ENCODE measurements at regions of chr17 and their contacts with region 1.

Region 1: GRCh38 chr17:79741751-79742588 is 11.2 kb downstream of the ENPP7 start:
- DNase-seq: peak; percentile 84
- ATAC-seq: peak; percentile 63
- H3K4me3 Mint-ChIP-seq: no peak overlapping the region
- H3K27ac Mint-ChIP-seq: no peak overlapping the region
- H3K4me1 Mint-ChIP-seq: peaks cover 13% of the 10 kb centered on the region
- H3K27me3 Mint-ChIP-seq: peaks cover 31% of the 10 kb centered on the region

Region 2: DNA sequence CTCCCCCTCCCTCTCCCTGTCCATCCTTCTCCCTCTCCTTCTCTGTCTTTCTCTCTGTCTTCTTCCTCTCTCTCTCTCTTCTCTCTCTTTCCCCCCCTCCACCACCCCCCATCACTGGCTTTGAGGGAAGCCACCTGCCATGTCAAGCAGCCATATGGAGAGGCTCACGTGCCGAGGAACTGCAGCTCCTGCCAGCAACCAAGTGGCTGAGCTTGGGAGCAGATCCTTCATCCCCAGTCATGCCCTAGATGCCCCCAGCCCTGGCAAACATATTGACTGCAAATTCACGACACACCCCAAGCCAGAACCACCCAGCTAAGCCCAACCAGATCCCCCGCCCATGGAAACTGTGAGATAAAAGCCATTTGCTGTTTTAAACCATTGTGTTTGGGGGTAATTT is 90.2 kb before region 1 on chr17:
- CTCF ChIA-PET with region 1: no interaction called
- POLR2A ChIA-PET with region 1: no interaction called
- intact Hi-C with region 1: no loop called
- DNase-seq: no peak
- ATAC-seq: no peak
- H3K4me3 Mint-ChIP-seq: no peak overlapping the region
- H3K27ac Mint-ChIP-seq: no peak overlapping the region
- H3K4me1 Mint-ChIP-seq: no peaks in the 10 kb centered on the region
- H3K27me3 Mint-ChIP-seq: peaks cover 25% of the 10 kb centered on the region

Region 3: DNA sequence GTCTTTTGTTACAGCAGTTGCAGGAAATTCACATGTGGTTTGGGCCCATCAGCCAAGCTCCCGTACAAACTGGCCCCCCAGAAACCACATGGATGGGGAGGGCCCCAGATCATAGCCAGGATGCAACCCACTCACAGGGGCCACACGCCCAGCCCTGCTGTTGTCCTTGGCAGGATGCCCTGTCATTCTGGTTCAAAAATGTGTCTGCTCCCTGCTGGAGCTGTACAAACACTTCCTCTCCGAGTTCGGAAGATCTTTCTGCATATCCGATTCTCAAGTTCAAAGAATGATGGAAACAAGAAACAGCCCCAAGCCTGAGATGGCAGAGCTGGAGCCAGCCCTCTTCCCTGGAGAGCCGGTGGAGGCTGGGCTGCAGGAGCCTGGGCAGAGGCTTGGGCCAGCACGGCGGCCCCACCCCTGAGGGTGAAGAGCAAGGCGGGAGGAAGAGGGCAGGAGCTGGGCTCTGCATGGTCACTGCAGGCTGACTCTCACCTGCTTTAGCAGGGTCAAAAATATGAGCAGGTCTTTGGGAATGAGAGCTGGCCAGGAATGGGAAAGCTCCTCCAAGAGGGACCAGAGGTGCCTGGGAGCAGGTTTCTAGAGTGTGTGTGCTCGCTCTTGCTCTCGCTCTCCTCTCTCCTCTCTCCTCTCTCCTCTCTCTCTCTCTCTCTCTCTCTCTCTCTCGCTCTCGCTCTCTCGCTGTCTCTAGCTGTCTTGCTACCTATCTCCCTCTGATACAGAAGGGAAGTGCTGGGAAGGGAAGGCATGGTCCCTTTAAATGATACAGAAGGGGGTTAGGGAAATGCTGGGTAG is 46.0 kb before region 1 on chr17:
- CTCF ChIA-PET with region 1: no interaction called
- POLR2A ChIA-PET with region 1: no interaction called
- intact Hi-C with region 1: no loop called
- DNase-seq: no peak
- ATAC-seq: no peak
- H3K4me3 Mint-ChIP-seq: no peak overlapping the region
- H3K27ac Mint-ChIP-seq: no peak overlapping the region
- H3K4me1 Mint-ChIP-seq: no peaks in the 10 kb centered on the region
- H3K27me3 Mint-ChIP-seq: peaks cover 17% of the 10 kb centered on the region

Region 4: GRCh38 chr17:79728226-79728907 is 13.6 kb before region 1 on chr17:
- CTCF ChIA-PET with region 1: interaction called, 11 read pairs
- POLR2A ChIA-PET with region 1: no interaction called
- intact Hi-C with region 1: loop called in 1 of 2 experiments (anchors 1 kb)
- DNase-seq: peak; percentile 91
- ATAC-seq: peak; percentile 90
- H3K4me3 Mint-ChIP-seq: peak overlapping the region; percentile 63
- H3K27ac Mint-ChIP-seq: peak overlapping the region; percentile 75
- H3K4me1 Mint-ChIP-seq: peaks cover 4% of the 10 kb centered on the region
- H3K27me3 Mint-ChIP-seq: no peaks in the 10 kb centered on the region

Region 5: GRCh38 chr17:79777894-79778503 is 36.0 kb after region 1 on chr17 and contains the start of gene CBX2:
- CTCF ChIA-PET with region 1: interaction called, 10 read pairs
- POLR2A ChIA-PET with region 1: no interaction called
- intact Hi-C with region 1: loop called in 1 of 2 experiments (anchors 1 kb)
- DNase-seq: peak; percentile 90
- ATAC-seq: peak; percentile 84
- H3K4me3 Mint-ChIP-seq: peak within 1 kb of the TSS; percentile 77
- H3K27ac Mint-ChIP-seq: peak within 1 kb of the TSS; percentile 76
- H3K4me1 Mint-ChIP-seq: peaks cover 17% of the 10 kb centered on the region
- H3K27me3 Mint-ChIP-seq: peaks cover 64% of the 10 kb centered on the region
- total RNA-seq, gene CBX2: 4.2 to 4.3 TPM

Region 6: DNA sequence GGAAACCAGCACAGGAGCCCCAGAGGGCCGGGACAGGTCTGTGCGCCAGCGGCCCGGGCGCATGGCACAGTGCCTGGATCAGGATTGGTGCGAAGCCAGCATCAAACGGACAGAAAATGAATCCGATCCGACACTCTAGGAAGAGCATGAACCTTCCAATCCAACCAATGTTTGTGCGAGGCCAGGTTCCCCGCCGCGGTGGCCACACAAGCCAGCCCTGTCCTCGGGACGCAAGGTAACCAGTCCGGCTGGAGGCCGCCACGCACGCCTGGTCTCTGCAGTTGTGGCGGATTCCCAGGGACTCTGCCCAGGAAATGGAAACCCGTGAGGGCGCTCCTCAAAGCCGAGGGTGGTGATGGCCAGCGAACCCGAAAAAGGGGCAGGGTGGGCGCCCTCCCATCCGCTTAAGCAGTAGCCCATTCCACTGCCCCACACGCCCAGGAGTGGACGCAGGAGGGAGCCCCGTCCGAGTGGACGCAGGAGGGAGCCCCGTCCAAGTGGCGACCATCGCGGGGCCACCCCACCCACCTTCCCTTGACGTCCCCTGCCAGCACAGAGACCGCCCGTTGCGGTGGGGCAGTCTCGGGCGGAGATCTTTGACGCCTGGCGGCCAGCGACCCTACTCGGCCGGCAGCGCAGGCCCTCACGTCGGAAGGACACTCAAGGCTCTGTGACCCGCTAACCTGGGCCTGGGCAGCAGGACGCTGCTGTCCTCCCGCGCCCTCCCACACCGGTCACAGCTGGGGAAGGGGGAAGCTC is 48.6 kb after region 1 on chr17:
- CTCF ChIA-PET with region 1: no interaction called
- POLR2A ChIA-PET with region 1: no interaction called
- intact Hi-C with region 1: no loop called
- DNase-seq: no peak
- ATAC-seq: peak; percentile 34
- H3K4me3 Mint-ChIP-seq: no peak overlapping the region
- H3K27ac Mint-ChIP-seq: no peak overlapping the region
- H3K4me1 Mint-ChIP-seq: peaks cover 4% of the 10 kb centered on the region
- H3K27me3 Mint-ChIP-seq: peaks cover 46% of the 10 kb centered on the region

Region 7: DNA sequence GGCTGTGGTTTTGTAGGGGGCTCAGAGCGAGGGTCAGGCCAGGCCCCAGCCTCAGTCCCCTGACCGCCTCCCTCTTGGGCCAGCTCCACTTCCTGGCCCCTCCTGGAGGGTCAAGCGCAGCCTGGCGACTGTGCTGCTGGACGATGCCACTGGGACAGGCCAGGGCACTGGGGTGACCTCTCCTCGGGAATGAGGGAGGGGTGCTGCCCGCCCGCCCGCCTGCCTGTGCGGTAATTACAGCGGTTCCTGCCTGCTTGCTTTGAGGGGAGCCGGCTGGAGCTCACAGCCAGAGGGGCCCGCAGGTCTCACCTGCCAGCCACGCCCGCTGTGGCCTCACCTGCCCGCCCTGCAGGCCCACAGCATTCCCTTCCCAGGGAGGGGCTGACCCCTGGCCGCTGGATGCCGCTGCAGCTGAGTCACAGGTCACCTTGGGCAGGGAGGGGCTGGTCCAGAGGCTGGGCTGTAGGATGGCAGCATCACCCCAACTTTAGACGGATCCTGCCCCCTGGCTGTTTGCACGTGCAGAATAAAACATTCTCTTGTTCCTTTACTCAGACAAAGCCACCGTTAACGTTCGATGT is 174.0 kb after region 1 on chr17:
- CTCF ChIA-PET with region 1: interaction called, 4 read pairs
- POLR2A ChIA-PET with region 1: no interaction called
- intact Hi-C with region 1: loop called (anchors 1 to 5 kb)
- DNase-seq: peak; percentile 51
- ATAC-seq: no peak
- H3K4me3 Mint-ChIP-seq: no peak overlapping the region
- H3K27ac Mint-ChIP-seq: no peak overlapping the region
- H3K4me1 Mint-ChIP-seq: no peaks in the 10 kb centered on the region
- H3K27me3 Mint-ChIP-seq: peaks cover 2% of the 10 kb centered on the region

Region 8: DNA sequence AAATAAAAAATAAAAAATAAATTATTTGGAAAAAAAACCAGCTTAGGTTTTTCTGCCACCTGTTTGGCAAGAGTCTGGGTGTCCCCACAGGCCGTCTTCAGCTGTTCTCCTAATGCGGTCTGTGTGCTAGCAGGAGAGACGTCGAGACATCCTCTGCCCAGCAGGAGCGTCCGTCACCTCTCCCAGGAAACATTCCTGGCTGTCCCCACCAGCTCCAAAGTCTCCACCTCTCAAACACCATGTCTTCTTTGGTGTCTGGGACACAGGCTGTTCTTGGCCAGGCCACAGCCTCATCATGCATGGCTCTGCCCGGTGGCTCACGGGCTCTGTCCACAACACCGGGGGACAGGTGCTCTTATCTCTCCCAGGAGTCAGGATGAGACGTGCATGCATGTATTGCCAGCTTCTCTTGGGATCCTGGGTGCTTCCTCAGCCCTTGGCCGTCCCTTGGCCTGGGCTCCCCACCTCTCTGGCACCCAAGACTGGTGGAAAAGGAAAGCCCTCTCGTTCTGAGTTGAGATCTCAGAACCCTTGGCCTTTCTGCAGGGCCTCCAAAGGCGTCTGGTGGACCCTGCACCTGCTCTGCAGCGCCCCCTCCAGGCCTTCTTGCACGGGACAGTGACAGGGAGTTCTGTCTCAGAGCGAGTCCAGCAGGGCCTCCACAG is 182.1 kb after region 1 on chr17:
- CTCF ChIA-PET with region 1: interaction called, 3 read pairs
- POLR2A ChIA-PET with region 1: no interaction called
- intact Hi-C with region 1: loop called (anchors 2 to 5 kb)
- DNase-seq: peak; percentile 82
- ATAC-seq: peak; percentile 90
- H3K4me3 Mint-ChIP-seq: no peak overlapping the region
- H3K27ac Mint-ChIP-seq: no peak overlapping the region
- H3K4me1 Mint-ChIP-seq: peaks cover 4% of the 10 kb centered on the region
- H3K27me3 Mint-ChIP-seq: peaks cover 12% of the 10 kb centered on the region

Region 9: GRCh38 chr17:79970576-79971068 is 228.7 kb after region 1 on chr17:
- CTCF ChIA-PET with region 1: interaction called, 4 read pairs
- POLR2A ChIA-PET with region 1: no interaction called
- intact Hi-C with region 1: loop called in 1 of 2 experiments (anchors 5 kb)
- DNase-seq: peak; percentile 34
- ATAC-seq: no peak
- H3K4me3 Mint-ChIP-seq: no peak overlapping the region
- H3K27ac Mint-ChIP-seq: no peak overlapping the region
- H3K4me1 Mint-ChIP-seq: no peaks in the 10 kb centered on the region
- H3K27me3 Mint-ChIP-seq: no peaks in the 10 kb centered on the region

Region 10: DNA sequence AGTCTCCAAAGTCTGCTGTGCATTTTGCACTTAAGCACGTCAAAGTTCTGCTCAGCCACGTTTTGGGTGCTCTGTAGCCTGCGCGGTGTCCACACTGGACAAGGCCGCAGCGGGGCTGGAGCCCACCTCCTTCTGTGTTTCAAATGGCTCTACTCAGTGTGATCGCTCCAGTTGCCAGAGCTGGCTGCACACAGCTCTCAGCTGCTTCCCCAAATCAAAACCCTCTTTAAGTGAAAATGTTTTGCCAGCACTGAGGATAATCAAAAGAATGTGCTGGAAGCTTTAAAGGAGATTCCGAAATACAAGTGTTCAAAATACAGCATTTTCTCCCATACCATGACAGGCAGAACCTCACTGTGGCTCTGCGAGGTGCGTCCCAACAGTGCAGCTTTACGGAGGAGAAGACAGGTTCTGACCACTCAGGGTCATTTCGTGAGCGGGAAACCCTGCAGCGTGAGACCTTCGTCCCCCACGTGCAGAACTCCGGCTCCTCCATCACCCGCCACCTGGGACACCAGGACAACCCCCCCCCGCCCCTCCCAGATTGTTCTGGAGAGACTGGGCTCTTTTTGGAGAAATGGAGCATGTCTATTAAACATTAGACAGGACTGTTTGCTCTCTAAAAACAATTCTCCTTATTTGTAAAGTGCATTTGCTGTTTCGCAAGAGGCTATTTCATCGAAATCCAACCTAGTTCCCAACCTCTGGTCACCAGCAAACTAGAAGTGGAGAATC is 277.1 kb after region 1 on chr17:
- CTCF ChIA-PET with region 1: no interaction called
- POLR2A ChIA-PET with region 1: interaction called, 11 read pairs
- intact Hi-C with region 1: no loop called
- DNase-seq: no peak
- ATAC-seq: no peak
- H3K4me3 Mint-ChIP-seq: no peak overlapping the region
- H3K27ac Mint-ChIP-seq: no peak overlapping the region
- H3K4me1 Mint-ChIP-seq: no peaks in the 10 kb centered on the region
- H3K27me3 Mint-ChIP-seq: no peaks in the 10 kb centered on the region